ENCODE measurements at regions of chr2 and their contacts with region 1.

Region 1: GRCh38 chr2:210195101-210195852 is 24.1 kb upstream of the KANSL1L start:
- DNase-seq: no peak
- ATAC-seq: peak in 1 of 2 donors; percentile 59

Region 2: DNA sequence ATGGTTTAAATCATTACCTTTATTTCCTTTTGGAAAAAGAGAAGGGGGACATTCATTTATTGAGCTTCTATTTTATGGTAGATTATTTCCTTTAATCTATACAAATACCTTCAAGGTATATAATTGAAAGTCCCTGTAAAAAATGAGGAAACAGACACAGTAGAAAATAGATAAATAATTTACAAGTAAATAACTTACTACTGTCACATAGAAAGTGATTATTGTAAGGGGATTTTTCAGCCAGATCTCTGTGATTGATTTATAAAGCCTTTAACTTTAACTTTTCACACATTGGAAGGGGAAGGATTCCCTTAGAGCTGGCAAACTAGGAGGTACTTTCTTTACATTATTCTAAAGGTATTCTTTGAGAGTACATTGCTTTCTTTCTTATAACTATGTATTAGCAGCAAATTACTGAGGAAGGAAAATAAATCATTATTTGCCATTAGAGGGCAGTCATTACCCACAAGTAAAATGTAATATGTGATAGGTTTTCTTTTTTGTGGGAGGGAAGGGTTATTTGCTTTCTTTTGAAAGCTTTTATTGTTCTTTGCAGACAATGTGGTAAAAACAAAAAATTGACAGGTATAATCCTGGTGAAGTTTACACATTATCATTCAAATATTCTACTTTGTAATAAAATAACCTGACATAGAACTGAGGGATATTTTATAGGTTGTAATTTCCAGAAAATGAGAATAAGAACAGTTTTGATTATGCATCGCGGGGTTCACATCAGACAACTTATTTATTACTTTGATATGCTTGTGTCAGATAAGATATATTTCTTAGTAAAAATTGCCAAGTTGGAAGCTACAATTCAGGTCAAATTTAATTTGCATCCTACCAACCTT is 217.7 kb before region 1 on chr2:
- intact Hi-C with region 1: loop called (anchors 1 to 5 kb)
- DNase-seq: no peak
- ATAC-seq: peak in 1 of 2 donors; percentile 27

Region 3: DNA sequence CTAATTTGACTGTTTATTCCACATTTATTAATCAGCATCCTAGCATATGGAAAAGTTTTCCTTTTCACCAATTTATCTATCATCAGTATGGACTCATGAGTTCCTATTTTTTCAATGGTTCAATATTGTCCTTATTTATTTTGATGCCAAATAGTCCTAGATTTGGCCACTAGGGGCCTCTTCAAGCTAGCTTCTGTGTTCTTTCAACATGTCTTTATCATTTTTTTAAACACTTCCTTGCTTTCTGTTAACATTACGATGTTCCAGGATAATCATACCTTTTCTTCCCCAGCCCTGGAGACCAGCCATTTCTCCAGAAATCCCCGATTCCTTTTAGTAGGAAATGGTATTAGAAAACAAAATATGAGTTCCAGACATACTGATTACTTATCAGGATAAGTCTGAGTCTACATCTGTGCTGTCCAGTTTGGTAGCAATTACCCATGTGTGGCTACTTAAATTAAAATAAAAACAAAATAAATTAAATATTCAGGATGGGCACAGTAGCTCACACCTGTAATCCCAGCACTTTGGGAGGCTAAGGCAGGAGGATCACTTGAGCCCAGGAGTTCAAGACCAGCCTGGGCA is 122.3 kb before region 1 on chr2:
- intact Hi-C with region 1: loop called in 1 of 2 experiments (anchors 5 kb)
- DNase-seq: no peak
- ATAC-seq: peak in 1 of 2 donors; percentile 27

Region 4: DNA sequence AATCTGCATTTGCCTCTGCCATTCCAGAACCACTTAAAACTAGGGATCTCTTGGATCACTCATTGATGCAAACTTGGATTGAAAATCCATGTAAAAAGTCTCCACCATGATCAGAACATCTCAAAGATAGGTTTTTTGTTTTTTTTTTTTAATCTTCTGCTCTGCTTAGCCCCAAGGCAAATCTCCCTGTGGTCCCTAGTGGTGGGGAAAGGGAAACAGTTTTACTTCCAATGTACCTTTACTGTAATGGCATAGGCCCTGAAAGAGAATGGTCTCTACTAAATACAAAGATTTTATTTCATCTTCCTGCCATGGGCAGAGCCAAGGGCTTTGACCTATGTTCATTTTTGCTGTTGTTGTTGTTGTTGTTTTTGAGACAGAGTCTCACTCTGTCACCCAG is 102.5 kb before region 1 on chr2:
- intact Hi-C with region 1: no loop called
- DNase-seq: no peak
- ATAC-seq: no peak

Region 5: GRCh38 chr2:210269148-210269547 is 73.9 kb after region 1 on chr2:
- intact Hi-C with region 1: no loop called
- DNase-seq: no peak
- ATAC-seq: no peak